ENCODE measurements at regions of chr19 and their contacts with region 1.

Region 1: DNA sequence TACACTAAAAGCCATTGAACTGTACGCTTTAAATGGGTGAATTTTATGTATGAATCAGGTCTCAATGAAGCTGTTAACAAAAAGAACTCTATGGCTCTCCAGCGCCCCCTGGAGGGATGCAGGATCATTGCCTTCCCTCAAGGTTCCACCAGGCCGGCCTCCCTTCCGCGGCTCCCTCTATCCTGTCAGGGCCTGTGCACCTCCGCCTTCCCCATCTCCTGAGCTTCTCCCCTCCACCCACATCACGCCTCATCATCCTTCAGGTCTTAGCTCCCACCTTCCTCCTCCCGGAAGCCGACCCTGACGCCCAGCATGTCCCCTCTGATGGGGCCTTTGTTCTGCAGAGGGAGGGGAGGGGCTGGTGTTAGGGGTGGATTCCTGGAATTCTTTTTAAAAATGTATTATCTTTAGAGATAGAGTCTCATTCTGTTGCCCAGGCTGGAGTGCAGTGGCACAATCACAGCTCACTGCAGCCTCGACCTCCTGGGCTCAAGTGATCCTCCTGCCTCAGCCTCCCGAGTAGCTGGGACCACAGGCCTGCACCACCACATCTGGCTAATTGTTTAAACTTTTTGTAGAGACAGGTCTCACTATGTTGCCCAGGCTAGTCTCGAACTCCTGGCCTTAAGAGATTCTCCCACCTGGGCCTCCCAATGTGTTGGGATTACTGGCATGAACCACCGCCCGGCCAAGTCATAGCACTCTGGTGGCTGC is 27.7 kb downstream of the MEIS3 start:
- H3K4me3 Mint-ChIP-seq: no peak overlapping the region
- H3K27ac Mint-ChIP-seq: no peak overlapping the region
- H3K4me1 Mint-ChIP-seq: peaks cover 36% of the 10 kb centered on the region
- H3K27me3 Mint-ChIP-seq: peaks cover 34% of the 10 kb centered on the region

Region 2: DNA sequence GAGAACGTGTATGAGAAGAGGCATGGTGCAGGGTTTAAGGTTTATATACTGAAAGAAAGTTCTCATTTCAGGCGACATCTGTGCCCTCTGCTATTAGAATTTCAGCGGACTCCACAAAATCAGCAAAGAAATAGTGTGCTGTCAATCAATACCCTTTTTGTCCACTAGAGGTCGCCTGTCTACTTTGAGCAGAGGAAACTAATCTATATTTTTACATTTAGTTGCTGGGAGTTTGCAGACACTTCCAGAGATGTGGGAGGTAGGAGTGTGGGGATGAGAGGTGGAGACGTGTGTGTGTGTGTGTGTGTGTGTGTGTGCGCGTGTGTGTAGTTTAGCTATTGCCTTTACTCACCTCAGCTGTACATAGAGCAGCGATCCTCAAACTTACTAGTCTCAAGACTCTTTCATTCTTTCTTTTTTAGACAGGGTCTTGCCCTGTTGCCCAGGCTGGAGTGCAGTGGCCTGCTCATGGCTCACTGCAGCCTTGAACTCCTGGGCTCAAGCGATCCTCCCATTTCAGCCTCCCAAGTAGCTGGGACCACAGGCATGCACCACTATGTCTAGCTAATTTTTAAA is 107.3 kb before region 1 on chr19:
- intact Hi-C with region 1: loop called (anchors 2 kb)
- H3K4me3 Mint-ChIP-seq: no peak overlapping the region
- H3K27ac Mint-ChIP-seq: no peak overlapping the region
- H3K4me1 Mint-ChIP-seq: peaks cover 18% of the 10 kb centered on the region
- H3K27me3 Mint-ChIP-seq: no peaks in the 10 kb centered on the region

Region 3: GRCh38 chr19:47296036-47296435 is 95.6 kb before region 1 on chr19:
- intact Hi-C with region 1: loop called (anchors 1 kb)
- H3K4me3 Mint-ChIP-seq: no peak overlapping the region
- H3K27ac Mint-ChIP-seq: no peak overlapping the region
- H3K4me1 Mint-ChIP-seq: peaks cover 12% of the 10 kb centered on the region
- H3K27me3 Mint-ChIP-seq: peaks cover 14% of the 10 kb centered on the region

Region 4: GRCh38 chr19:47315125-47315821 is 76.4 kb before region 1 on chr19:
- intact Hi-C with region 1: no loop called
- H3K4me3 Mint-ChIP-seq: peak overlapping the region; percentile 72
- H3K27ac Mint-ChIP-seq: peak overlapping the region; percentile 93
- H3K4me1 Mint-ChIP-seq: peaks cover 74% of the 10 kb centered on the region
- H3K27me3 Mint-ChIP-seq: no peaks in the 10 kb centered on the region

Measured in dendritic cell treated with granulocyte-macrophage colony-stimulating factor and Interleukin-4, amounts not matched to agents 40 ng/mL and 50 ng/mL, for 4 days (primary cell).